A673 (cell line): ENCODE measurements at regions of chr3 and their contacts with region 1.

Region 1: DNA sequence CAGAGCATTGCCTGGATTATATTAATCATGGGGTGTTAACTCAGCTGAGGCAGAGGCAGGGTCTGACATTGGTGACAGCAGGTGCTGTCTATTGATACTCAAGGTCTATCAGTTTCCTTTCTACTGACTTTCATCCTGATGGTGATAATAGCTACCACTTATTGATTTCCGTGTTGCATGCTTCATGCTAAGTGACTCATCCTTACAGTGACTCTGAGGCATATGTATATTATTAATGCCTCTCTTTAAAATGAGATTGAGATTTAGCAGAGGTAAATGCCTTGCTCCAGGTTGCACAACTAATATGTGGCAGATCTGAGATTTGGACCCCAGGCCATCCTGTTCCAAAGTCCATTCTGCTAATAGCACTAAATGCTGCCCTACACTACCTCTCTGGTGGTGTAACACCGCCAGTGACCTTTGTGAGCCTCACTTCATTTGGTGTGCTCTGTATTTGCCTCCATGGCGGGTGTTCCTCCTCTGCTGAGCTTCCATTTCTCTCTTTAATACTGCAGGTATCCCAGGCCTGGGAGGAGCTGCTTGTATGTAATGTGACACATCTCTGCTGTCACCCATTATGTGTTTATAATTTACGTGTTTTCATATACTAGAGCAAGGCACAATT is 50.4 kb downstream of the GPR171 start:
- DNase-seq: no peak
- H3K4me3 ChIP-seq: no peak overlapping the region
- H3K27ac ChIP-seq: no peak overlapping the region
- H3K4me1 ChIP-seq: no peaks in the 10 kb centered on the region
- H3K27me3 ChIP-seq: no peaks in the 10 kb centered on the region
- CTCF ChIP-seq: no peak

Region 2: DNA sequence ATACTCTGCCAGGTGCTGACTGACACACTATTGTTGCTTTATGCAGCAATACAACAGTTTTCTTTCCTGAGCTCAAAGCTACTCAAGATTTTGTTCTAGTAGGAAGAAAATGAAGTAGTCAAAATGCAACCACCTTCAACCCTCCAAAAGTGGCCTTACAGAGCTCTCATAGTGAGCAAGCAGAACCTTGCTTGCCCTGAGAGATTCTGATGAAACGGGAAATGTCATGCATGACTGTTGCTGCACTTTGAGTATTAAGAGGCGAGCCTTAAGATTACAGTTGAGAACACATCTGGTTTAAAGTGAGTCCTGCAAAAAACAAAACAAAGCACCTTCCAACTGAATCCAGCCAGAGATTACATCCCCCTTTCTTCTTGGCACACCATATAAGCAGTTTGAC is 277.0 kb before region 1 on chr3:
- CTCF ChIA-PET with region 1: no interaction called
- POLR2A ChIA-PET with region 1: interaction called, 21 read pairs
- intact Hi-C with region 1: no loop called
- DNase-seq: no peak
- H3K4me3 ChIP-seq: no peak overlapping the region
- H3K27ac ChIP-seq: no peak overlapping the region
- H3K4me1 ChIP-seq: no peaks in the 10 kb centered on the region
- H3K27me3 ChIP-seq: no peaks in the 10 kb centered on the region
- CTCF ChIP-seq: no peak